ENCODE measurements at regions of chr5 and their contacts with region 1.

Region 1: DNA sequence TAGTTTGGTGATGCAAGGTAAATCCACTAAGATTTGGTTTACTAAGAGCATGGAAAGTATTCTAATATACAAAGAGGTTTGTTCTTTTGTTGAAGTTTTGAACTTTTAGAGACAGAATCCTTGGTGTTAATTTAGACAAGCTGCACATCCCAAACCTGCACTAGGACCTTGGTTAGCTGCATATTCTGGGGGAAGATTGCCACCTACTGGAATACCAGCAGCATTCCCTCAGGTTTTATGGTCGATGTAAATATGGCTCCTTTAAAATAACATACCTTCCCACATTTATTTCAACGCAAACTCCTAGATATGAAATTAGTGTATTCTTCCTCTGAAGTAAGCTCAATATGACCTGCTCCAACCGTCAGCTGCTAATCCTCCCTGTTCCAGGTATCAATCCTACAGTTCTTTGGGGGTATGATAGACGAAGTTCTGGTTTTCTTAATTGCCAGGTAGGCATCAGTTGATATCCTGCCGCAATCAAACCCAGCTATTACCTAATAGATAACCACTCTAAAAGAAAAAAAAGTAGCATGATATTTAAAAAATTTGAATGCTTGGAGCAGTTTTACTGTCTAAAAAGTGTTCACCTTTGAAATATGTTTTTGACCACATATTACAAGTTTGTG is 624.1 kb downstream of the ISL1 start:
- DNase-seq: peak; percentile 51
- ATAC-seq: peak; percentile 76
- H3K4me3 ChIP-seq: no peak overlapping the region
- H3K27ac ChIP-seq: no peak overlapping the region
- H3K4me1 ChIP-seq: no peaks in the 10 kb centered on the region
- H3K27me3 ChIP-seq: no peaks in the 10 kb centered on the region
- CTCF ChIP-seq: peak; percentile 81

Region 2: DNA sequence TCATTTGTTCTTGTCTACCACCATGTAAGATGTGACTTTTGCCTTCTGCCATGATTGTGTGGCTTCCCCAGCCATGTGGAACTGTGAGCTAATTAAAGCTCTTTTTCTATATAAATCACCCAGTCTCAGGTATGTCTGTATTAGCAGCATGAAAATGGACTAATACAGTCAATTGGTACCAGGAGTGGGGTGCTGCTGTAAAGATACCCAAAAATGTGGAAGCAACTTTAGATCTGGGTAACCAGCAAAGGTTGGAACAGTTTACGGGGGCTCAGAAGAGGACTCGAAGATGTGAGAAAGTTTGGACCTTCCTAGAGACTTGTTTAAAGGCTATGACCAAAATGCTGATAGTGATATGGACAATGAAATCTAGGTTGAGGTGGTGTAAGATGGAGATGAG is 135.2 kb before region 1 on chr5:
- CTCF ChIA-PET with region 1: interaction called, 10 read pairs
- POLR2A ChIA-PET with region 1: no interaction called
- intact Hi-C with region 1: no loop called
- DNase-seq: no peak
- ATAC-seq: no peak
- H3K4me3 ChIP-seq: no peak overlapping the region
- H3K27ac ChIP-seq: no peak overlapping the region
- H3K4me1 ChIP-seq: no peaks in the 10 kb centered on the region
- H3K27me3 ChIP-seq: no peaks in the 10 kb centered on the region
- CTCF ChIP-seq: no peak

Region 3: GRCh38 chr5:52043543-52043942 is 36.2 kb after region 1 on chr5:
- CTCF ChIA-PET with region 1: no interaction called
- POLR2A ChIA-PET with region 1: no interaction called
- intact Hi-C with region 1: no loop called
- DNase-seq: no peak
- ATAC-seq: no peak
- H3K4me3 ChIP-seq: no peak overlapping the region
- H3K27ac ChIP-seq: no peak overlapping the region
- H3K4me1 ChIP-seq: no peaks in the 10 kb centered on the region
- H3K27me3 ChIP-seq: no peaks in the 10 kb centered on the region
- CTCF ChIP-seq: no peak

Measured in PC-3 (cell line).